ENCODE measurements at regions of chr3 and their contacts with region 1.

Region 1: DNA sequence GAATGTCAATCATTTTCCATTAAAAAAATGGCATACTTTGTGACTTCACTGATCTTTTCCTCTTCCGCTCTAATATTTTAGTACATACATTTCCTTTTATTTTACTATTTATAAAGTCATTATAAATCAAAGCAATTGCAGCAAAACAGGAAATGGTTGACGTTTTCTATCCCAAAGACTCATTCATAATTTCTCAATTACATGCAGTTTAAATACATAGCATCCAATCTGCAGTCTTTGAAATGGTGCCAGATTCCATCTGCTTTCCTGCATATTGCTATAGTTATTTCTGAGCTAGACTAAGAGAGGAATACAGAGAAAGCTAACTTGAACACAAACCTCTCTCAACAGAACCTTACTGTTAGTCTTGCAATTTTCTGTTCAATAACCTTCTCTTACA is 179.8 kb downstream of the ZPLD1 start:
- DNase-seq: no peak
- ATAC-seq: no peak

Region 2: GRCh38 chr3:102661707-102662497 is 47.3 kb after region 1 on chr3:
- intact Hi-C with region 1: no loop called
- DNase-seq: no peak
- ATAC-seq: no peak

Region 3: DNA sequence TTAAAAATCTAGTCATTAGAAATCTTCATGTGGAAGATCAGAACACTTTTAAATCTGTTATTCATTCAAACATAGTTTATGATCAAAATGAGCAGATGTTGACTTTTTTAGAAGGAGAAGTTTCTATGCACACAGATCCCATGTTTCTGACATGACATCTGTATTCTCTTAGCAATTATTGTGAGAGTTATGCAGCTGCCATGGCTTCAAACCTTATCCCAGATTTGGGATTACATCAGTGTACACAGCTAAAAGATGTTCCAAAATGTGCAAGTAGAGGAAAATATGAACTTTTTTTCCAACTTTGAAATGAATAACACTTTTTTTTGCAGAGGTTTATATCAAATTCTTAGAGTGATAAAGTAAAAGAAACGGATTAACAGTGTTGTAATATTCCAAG is 987.1 kb after region 1 on chr3:
- intact Hi-C with region 1: loop called (anchors 2 kb)
- DNase-seq: no peak
- ATAC-seq: no peak